Endothelial cell of umbilical vein (primary cell): ENCODE measurements at regions of chr2 and their contacts with region 1.

Region 1: GRCh38 chr2:127479219-127479825 is 47.0 kb downstream of the IWS1 start:
- DNase-seq: peak; percentile 70
- H3K4me3 ChIP-seq: no peak overlapping the region
- H3K27ac ChIP-seq: no peak overlapping the region
- H3K4me1 ChIP-seq: no peaks in the 10 kb centered on the region
- H3K27me3 ChIP-seq: no peaks in the 10 kb centered on the region
- CTCF ChIP-seq: peak; percentile 46 to 55
- POLR2A ChIP-seq: no peak

Region 2: GRCh38 chr2:127293748-127294562 is 185.4 kb before region 1 on chr2 and contains the start of gene ERCC3:
- CTCF ChIA-PET with region 1: interaction called, 14 read pairs
- POLR2A ChIA-PET with region 1: no interaction called
- dilution Hi-C with region 1: no loop called
- intact Hi-C with region 1: no loop called
- DNase-seq: peak; percentile 81
- H3K4me3 ChIP-seq: peak within 1 kb of the TSS; percentile 54 to 90 (median 82)
- H3K27ac ChIP-seq: peak within 1 kb of the TSS; percentile 31
- H3K4me1 ChIP-seq: peaks cover 12% of the 10 kb centered on the region
- H3K27me3 ChIP-seq: no peaks in the 10 kb centered on the region
- CTCF ChIP-seq: no peak
- POLR2A ChIP-seq: peak; percentile 90
- total RNA-seq, gene ERCC3: 46.6 and 47.3 TPM in 2 replicates

Region 3: DNA sequence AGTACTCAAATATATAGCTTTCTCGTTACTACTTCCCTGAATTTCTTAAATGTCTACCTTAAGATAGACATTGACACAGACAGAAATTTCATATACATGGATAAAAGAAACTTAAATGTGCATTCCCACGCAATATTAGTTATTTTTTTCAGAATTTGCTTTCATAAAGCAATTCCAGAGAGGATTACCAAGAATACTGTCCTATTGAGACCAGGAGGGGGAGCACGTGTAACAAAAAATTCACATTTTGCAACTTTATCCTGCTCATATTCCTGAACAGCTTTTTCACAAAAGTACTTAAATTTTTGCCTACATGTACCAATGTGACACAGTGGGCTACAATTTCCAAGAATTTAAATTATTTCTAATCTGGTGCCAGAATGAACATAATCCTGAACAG is 154.7 kb before region 1 on chr2:
- CTCF ChIA-PET with region 1: interaction called, 125 read pairs
- POLR2A ChIA-PET with region 1: no interaction called
- dilution Hi-C with region 1: no loop called
- intact Hi-C with region 1: loop called (anchors 1 kb)
- DNase-seq: peak; percentile 66
- H3K4me3 ChIP-seq: no peak overlapping the region
- H3K27ac ChIP-seq: no peak overlapping the region
- H3K4me1 ChIP-seq: no peaks in the 10 kb centered on the region
- H3K27me3 ChIP-seq: no peaks in the 10 kb centered on the region
- CTCF ChIP-seq: peak; percentile 38 to 48
- POLR2A ChIP-seq: no peak

Region 4: DNA sequence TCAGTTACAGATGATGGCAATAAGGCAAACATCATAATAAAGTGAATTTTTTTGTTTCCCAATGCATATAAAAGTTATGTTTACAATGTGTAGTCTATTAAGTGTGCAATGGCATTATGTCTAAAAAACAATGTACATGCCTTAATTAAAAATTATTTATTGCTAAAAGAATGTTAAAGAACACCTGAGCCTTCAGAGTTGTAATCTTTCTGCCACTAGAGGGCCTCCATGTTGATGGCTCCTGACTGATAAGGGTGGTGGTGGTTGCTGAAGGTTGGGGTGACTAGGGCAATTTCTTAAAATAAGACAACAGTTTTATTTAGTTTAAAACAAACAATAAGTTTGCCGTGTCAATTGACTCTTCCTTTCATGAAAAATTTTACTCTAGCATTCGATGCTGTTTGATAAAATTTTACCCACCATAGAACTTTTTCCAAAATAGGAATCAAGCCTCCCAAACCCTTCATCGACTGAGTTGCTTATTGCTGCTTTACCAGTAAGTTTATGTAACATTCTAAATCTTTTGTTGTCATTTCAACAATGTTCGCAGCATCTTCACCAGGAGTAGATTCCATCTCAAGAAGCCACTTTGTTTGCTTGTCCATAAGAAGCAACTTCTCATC is 123.8 kb before region 1 on chr2:
- CTCF ChIA-PET with region 1: interaction called, 9 read pairs
- POLR2A ChIA-PET with region 1: no interaction called
- dilution Hi-C with region 1: no loop called
- intact Hi-C with region 1: loop called (anchors 1 kb)
- DNase-seq: peak; percentile 25
- H3K4me3 ChIP-seq: no peak overlapping the region
- H3K27ac ChIP-seq: no peak overlapping the region
- H3K4me1 ChIP-seq: no peaks in the 10 kb centered on the region
- H3K27me3 ChIP-seq: no peaks in the 10 kb centered on the region
- CTCF ChIP-seq: peak; percentile 49 to 51
- POLR2A ChIP-seq: no peak

Region 5: DNA sequence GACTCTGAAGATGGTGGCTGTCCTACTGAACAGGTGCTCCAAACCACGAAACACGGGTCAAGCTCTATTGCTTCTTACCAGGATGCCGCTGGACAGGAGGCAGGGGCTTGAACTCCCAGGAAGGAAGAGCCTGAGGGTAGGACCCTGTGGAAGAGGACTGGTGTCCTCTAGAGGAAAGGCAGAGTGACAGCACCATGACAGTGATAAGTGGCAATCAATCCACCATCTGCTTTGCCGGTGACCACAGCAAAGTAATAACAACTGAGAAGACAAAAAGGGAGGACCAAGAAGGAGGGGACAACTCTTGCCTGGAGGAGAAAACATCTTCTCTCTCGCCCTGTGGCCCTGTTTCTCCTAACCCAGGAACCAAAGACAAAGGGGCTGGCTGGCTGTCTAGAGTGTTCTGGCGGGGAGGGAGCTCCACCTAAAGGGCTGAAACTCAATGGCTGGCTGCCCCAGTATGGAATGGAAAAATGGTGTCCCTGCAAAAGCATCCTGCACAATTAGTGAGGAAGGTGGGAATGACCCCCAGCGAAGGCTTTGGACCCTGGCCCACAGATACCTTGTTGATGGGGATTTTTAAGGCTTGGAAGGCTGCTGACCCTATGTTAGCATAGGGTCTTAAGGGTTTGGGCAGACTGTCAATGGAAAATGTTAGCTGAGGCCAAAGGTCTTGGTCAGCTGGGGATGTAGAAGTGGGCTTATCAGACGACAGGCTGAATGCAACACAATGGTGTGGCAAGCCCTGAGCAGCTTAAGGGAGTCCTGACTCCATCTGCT is 25.7 kb before region 1 on chr2:
- CTCF ChIA-PET with region 1: interaction called, 10 read pairs
- POLR2A ChIA-PET with region 1: no interaction called
- dilution Hi-C with region 1: no loop called
- intact Hi-C with region 1: no loop called
- DNase-seq: peak; percentile 5
- H3K4me3 ChIP-seq: no peak overlapping the region
- H3K27ac ChIP-seq: no peak overlapping the region
- H3K4me1 ChIP-seq: no peaks in the 10 kb centered on the region
- H3K27me3 ChIP-seq: no peaks in the 10 kb centered on the region
- CTCF ChIP-seq: peak; percentile 2 to 12
- POLR2A ChIP-seq: no peak

Region 6: GRCh38 chr2:127701651-127702394 is 222.5 kb after region 1 on chr2:
- CTCF ChIA-PET with region 1: no interaction called
- POLR2A ChIA-PET with region 1: no interaction called
- dilution Hi-C with region 1: no loop called
- intact Hi-C with region 1: no loop called
- DNase-seq: peak; percentile 80
- H3K4me3 ChIP-seq: peak overlapping the region; percentile 40 to 79 (median 45)
- H3K27ac ChIP-seq: peak overlapping the region; percentile 85
- H3K4me1 ChIP-seq: peaks cover 17% of the 10 kb centered on the region
- H3K27me3 ChIP-seq: no peaks in the 10 kb centered on the region
- CTCF ChIP-seq: peak in 1 of 2 donors; percentile 33
- POLR2A ChIP-seq: no peak

Region 7: GRCh38 chr2:127790694-127791529 is 311.6 kb after region 1 on chr2:
- CTCF ChIA-PET with region 1: no interaction called
- POLR2A ChIA-PET with region 1: no interaction called
- dilution Hi-C with region 1: no loop called
- intact Hi-C with region 1: no loop called
- DNase-seq: no peak
- H3K4me3 ChIP-seq: no peak overlapping the region
- H3K27ac ChIP-seq: no peak overlapping the region
- H3K4me1 ChIP-seq: no peaks in the 10 kb centered on the region
- H3K27me3 ChIP-seq: no peaks in the 10 kb centered on the region
- CTCF ChIP-seq: no peak
- POLR2A ChIP-seq: no peak